Left colon (tissue), 2 donors: ENCODE measurements at regions of chr7 and their contacts with region 1.

Region 1: DNA sequence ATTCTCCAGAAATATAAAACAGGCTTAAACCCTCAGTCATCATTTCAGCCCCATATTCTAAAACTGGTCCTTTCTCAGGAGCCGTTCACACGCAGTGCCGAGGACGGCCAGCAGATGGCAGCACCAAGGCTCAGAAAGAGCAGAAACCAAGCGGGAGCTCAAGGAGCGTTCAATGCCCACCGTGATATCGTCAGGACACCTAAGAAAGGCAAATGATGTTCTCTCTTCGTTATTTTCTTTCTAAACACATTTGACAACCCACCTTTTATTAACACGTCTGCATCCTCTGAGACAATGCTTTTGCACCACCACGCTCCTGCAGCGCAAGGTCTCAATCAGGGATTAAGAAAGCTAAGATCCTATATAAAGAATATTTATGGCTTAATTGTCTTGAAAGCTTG is 45.7 kb upstream of the RBM33 start:
- DNase-seq: peak; percentile 52 to 90
- ATAC-seq: peak; percentile 84

Region 2: DNA sequence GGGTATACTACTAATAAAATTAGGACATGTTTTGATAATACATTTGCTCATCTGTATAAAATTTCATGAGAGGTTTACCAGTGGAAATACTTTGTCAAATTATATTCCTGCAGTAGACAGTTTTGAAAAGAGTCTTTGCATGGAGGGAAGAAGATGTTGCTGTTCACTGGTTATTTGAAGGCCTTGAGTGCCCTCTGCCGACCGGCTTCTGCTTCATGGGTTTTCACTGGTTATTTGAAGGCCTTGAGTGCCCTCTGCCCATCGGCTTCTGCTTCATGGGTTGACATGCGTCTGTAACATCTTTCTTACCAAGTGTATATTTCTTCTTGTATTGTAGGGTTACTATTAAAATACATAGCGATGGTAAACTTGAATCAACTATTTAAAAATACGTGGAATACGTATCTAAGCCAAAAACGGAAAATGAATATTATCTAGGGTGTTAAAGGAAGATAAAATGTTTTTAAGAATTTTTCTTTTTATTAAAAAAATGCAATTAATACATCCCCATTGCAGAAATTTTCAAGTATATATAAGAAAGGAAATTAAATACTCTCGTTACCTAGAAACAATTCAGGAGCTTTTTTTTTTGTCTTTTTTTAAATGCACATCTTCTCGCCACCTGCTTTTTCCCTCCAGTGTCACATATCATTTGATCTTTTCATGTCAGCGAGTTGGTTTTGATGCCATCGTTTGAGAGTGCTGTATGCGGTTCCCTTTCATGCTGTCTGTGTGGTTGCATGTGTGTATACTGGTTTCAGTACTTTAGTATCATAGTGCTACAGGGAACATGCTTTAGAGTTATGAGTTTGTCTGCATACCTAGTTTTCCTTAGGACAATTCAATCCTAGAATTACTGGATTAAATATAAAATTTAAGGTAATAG is 140.1 kb after region 1 on chr7:
- intact Hi-C with region 1: loop called in 1 of 2 experiments (anchors 5 kb)
- DNase-seq: peak; percentile 51 to 88
- ATAC-seq: peak; percentile 91

Region 3: DNA sequence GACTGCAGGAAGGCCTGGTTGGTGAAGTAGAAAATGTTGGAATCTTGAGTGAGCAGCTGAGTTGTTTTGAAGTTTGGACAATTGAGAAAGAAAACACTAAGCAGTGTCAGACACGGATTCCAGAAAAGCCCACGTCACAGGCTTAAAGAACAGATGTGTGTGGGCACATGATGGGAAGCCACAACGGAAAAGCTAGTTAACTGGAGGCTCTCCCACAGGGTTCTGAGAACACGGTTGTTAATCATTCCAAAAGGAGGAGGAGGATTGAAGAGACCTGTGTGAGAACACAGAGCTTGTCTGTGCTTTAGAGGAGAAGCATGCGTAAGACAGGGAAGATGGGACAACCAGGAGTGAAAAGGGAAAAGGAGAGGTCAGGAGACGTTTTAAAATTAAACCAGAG is 170.9 kb after region 1 on chr7:
- intact Hi-C with region 1: loop called in 1 of 2 experiments (anchors 5 kb)
- DNase-seq: no peak
- ATAC-seq: no peak